CD8-positive, alpha-beta T cell (primary cell): ENCODE measurements at regions of chr10 and their contacts with region 1.

Region 1: GRCh38 chr10:112183329-112184051 is at the start of gene GPAM:
- DNase-seq: peak; percentile 95 to 100 (median 99)
- ATAC-seq: peak; percentile 98
- H3K4me3 ChIP-seq: peak within 1 kb of the TSS; percentile 65 to 92
- H3K4me3 Mint-ChIP-seq: peak within 1 kb of the TSS; percentile 87
- H3K27ac ChIP-seq: peak within 1 kb of the TSS; percentile 76 to 78
- H3K27ac Mint-ChIP-seq: peak within 1 kb of the TSS; percentile 93
- H3K4me1 ChIP-seq: peaks cover 17% of the 10 kb centered on the region
- H3K4me1 Mint-ChIP-seq: peaks cover 28% of the 10 kb centered on the region
- H3K27me3 ChIP-seq: no peaks in the 10 kb centered on the region
- H3K27me3 Mint-ChIP-seq: no peaks in the 10 kb centered on the region
- CTCF ChIP-seq: no peak
- total RNA-seq, gene GPAM: 3.2 to 4.2 TPM

Region 2: GRCh38 chr10:112446855-112447711 is 263.6 kb after region 1 on chr10 and contains the starts of genes VTI1A and ZDHHC6:
- CTCF ChIA-PET with region 1: no interaction called
- POLR2A ChIA-PET with region 1: interaction called, 9 read pairs
- intact Hi-C with region 1: loop called (anchors 1 kb)
- DNase-seq: peak; percentile 68 to 92 (median 85)
- ATAC-seq: peak; percentile 88
- H3K4me3 ChIP-seq: peak within 1 kb of the TSS; percentile 93 to 96
- H3K4me3 Mint-ChIP-seq: peak within 1 kb of the TSS; percentile 94
- H3K27ac ChIP-seq: peak within 1 kb of the TSS; percentile 91 to 92
- H3K27ac Mint-ChIP-seq: peak within 1 kb of the TSS; percentile 95
- H3K4me1 ChIP-seq: peaks cover 24% of the 10 kb centered on the region
- H3K4me1 Mint-ChIP-seq: peaks cover 66% of the 10 kb centered on the region
- H3K27me3 ChIP-seq: no peaks in the 10 kb centered on the region
- H3K27me3 Mint-ChIP-seq: no peaks in the 10 kb centered on the region
- CTCF ChIP-seq: no peak
- total RNA-seq, gene VTI1A: 59.0 to 62.7 TPM
- total RNA-seq, gene ZDHHC6: 41.4 to 41.7 TPM

Region 3: GRCh38 chr10:112985690-112986543 is 802.4 kb after region 1 on chr10:
- CTCF ChIA-PET with region 1: no interaction called
- POLR2A ChIA-PET with region 1: no interaction called
- intact Hi-C with region 1: no loop called
- DNase-seq: peak in 1 of 9 experiments; percentile 20
- ATAC-seq: no peak
- H3K4me3 ChIP-seq: no peak overlapping the region
- H3K4me3 Mint-ChIP-seq: no peak overlapping the region
- H3K27ac ChIP-seq: no peak overlapping the region
- H3K27ac Mint-ChIP-seq: no peak overlapping the region
- H3K4me1 ChIP-seq: peaks cover 19% of the 10 kb centered on the region
- H3K4me1 Mint-ChIP-seq: peaks cover 33% of the 10 kb centered on the region
- H3K27me3 ChIP-seq: no peaks in the 10 kb centered on the region
- H3K27me3 Mint-ChIP-seq: peaks cover 12% of the 10 kb centered on the region
- CTCF ChIP-seq: no peak